ENCODE measurements at regions of chr21 and their contacts with region 1.

Region 1: DNA sequence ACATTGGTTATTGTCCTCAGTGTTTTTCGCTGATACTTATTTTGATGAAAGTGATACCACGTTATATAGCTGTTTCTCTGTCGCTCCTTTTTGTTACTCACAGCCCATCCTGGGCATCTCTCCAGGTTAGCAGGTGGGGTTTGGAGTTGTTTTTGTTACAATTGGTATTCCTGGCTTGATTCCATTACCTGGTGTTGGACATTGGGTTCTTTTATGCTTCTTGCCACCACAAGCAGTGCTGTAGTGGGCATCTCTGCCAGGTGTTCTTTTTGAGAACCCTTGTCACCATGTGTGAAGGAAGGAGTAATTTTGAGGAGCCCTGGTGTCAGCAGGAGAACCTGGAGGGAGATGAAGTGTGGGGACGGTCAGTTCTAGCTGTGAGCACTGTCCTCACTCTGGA is 47.5 kb upstream of the PWP2 start:
- DNase-seq: no peak
- ATAC-seq: no peak
- H3K4me3 Mint-ChIP-seq: no peak overlapping the region
- H3K27ac Mint-ChIP-seq: no peak overlapping the region
- H3K4me1 Mint-ChIP-seq: peaks cover under 1% of the 10 kb centered on the region
- H3K27me3 Mint-ChIP-seq: no peaks in the 10 kb centered on the region
- CTCF ChIP-seq: no peak

Region 2: GRCh38 chr21:44076284-44076683 is 16.6 kb after region 1 on chr21:
- CTCF ChIA-PET with region 1: no interaction called
- POLR2A ChIA-PET with region 1: no interaction called
- intact Hi-C with region 1: loop called (anchors 2 kb)
- DNase-seq: no peak
- ATAC-seq: no peak
- H3K4me3 Mint-ChIP-seq: no peak overlapping the region
- H3K27ac Mint-ChIP-seq: no peak overlapping the region
- H3K4me1 Mint-ChIP-seq: peaks cover 12% of the 10 kb centered on the region
- H3K27me3 Mint-ChIP-seq: no peaks in the 10 kb centered on the region
- CTCF ChIP-seq: no peak

Measured in activated B cell treated with CpG ODN at 0.5 μM for 24 hours (primary cell).